Calu3 (cell line): ENCODE measurements at regions of chr6 and their contacts with region 1.

Region 1: GRCh38 chr6:106927531-106928398 is 46.8 kb downstream of the CD24 start:
- DNase-seq: peak; percentile 79
- H3K4me3 Mint-ChIP-seq: no peak overlapping the region
- H3K27ac Mint-ChIP-seq: no peak overlapping the region
- H3K4me1 Mint-ChIP-seq: peaks cover 23% of the 10 kb centered on the region
- H3K27me3 Mint-ChIP-seq: no peaks in the 10 kb centered on the region
- CTCF ChIP-seq: no peak

Region 2: GRCh38 chr6:106883808-106884262 is 43.9 kb before region 1 on chr6:
- CTCF ChIA-PET with region 1: no interaction called
- intact Hi-C with region 1: loop called (anchors 5 kb)
- DNase-seq: no peak
- H3K4me3 Mint-ChIP-seq: no peak overlapping the region
- H3K27ac Mint-ChIP-seq: no peak overlapping the region
- H3K4me1 Mint-ChIP-seq: peaks cover 56% of the 10 kb centered on the region
- H3K27me3 Mint-ChIP-seq: no peaks in the 10 kb centered on the region
- CTCF ChIP-seq: no peak

Region 3: DNA sequence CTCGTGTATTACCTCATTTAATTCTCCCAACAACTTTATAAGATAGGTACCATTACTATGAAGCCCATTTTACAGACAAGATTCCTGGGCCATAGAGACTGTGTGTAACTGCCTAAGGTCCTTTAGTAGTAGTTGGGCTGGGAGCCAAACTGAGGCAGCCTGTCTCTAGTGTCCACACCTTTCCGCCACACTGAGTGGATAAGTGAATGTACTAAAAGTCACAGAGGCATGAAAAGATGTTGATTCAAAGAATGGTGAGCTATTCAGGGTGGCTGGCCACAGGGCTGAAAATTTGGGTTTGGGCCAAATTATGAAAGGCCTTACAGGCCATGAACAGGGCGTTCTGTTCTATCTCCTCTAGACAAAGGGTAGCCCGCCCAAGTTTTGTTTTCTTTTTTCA is 35.8 kb after region 1 on chr6:
- CTCF ChIA-PET with region 1: no interaction called
- intact Hi-C with region 1: loop called (anchors 5 kb)
- DNase-seq: no peak
- H3K4me3 Mint-ChIP-seq: no peak overlapping the region
- H3K27ac Mint-ChIP-seq: no peak overlapping the region
- H3K4me1 Mint-ChIP-seq: peaks cover 13% of the 10 kb centered on the region
- H3K27me3 Mint-ChIP-seq: no peaks in the 10 kb centered on the region
- CTCF ChIP-seq: no peak